ENCODE measurements at regions of chr9 and their contacts with region 1.

Region 1: GRCh38 chr9:81689343-81690190 is at the start of gene TLE1:
- DNase-seq: peak; percentile 100
- ATAC-seq: peak; percentile 97
- H3K4me3 ChIP-seq: peak within 1 kb of the TSS; percentile 78 to 96
- H3K27ac ChIP-seq: peak within 1 kb of the TSS; percentile 87 to 92
- H3K4me1 ChIP-seq: peaks cover 0 to 5% of the 10 kb centered on the region in 2 donors
- H3K27me3 ChIP-seq: no peaks in the 10 kb centered on the region
- total RNA-seq, gene TLE1: 31.0 to 32.7 TPM

Region 2: DNA sequence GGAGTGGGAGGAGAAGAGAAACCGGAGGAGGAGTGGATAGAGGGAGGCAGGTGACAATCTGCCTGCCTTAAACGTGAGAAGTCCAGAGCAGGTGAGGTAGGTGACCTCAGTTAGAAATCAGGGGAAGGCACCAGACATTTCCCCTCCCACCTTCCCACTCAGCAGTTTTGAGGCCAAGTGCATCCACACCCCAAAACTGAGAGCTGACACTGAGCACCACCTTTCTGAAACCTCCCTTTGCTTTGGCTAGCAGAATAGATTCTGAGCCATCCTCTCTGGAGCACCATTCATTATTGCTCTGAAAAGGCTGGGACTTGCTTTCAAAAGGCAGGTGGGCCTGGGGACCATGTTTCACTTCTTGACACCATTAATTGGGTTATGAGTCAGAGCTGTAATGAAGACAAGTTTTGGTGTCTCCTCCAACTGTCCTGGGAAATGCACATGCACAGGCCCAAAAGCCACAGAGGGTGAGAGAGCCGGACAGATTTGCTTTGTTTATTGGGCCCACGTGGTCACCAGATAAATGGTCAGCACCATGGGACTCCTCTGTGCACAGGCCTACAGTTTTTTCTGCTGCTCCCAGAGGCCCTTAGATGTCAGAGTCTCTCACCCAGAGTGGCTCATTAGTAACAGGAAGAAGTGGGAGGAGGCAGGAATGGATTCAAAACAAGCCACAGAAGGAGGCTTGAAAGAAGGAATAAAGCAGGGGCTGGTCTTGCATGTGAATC is 314.9 kb before region 1 on chr9:
- intact Hi-C with region 1: loop called in 1 of 2 experiments (anchors 10 kb)
- DNase-seq: no peak
- ATAC-seq: no peak
- H3K4me3 ChIP-seq: no peak overlapping the region
- H3K27ac ChIP-seq: no peak overlapping the region
- H3K4me1 ChIP-seq: peaks cover 7 to 9% of the 10 kb centered on the region in 2 donors
- H3K27me3 ChIP-seq: no peaks in the 10 kb centered on the region

Region 3: DNA sequence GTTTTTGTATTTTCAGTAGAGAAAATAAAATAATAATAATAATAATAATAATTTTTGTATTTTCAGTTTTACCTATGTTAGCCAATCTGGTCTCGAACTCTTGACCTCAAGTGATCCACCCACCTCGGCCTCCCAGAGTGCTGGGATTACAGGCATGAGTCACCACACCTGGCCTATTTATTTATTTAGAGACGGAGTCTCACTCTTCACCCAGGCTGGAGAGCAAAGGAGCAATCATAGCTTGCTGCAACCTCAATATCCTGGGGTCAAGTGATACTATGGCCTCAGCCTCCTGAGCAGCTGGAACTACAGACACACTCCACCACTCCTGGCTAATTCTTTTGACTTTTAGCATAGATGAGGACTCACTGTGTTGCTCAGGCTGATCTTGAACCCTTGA is 167.7 kb before region 1 on chr9:
- intact Hi-C with region 1: loop called (anchors 1 kb)
- DNase-seq: no peak
- ATAC-seq: no peak
- H3K4me3 ChIP-seq: no peak overlapping the region
- H3K27ac ChIP-seq: no peak overlapping the region
- H3K4me1 ChIP-seq: no peaks in the 10 kb centered on the region
- H3K27me3 ChIP-seq: no peaks in the 10 kb centered on the region

Region 4: DNA sequence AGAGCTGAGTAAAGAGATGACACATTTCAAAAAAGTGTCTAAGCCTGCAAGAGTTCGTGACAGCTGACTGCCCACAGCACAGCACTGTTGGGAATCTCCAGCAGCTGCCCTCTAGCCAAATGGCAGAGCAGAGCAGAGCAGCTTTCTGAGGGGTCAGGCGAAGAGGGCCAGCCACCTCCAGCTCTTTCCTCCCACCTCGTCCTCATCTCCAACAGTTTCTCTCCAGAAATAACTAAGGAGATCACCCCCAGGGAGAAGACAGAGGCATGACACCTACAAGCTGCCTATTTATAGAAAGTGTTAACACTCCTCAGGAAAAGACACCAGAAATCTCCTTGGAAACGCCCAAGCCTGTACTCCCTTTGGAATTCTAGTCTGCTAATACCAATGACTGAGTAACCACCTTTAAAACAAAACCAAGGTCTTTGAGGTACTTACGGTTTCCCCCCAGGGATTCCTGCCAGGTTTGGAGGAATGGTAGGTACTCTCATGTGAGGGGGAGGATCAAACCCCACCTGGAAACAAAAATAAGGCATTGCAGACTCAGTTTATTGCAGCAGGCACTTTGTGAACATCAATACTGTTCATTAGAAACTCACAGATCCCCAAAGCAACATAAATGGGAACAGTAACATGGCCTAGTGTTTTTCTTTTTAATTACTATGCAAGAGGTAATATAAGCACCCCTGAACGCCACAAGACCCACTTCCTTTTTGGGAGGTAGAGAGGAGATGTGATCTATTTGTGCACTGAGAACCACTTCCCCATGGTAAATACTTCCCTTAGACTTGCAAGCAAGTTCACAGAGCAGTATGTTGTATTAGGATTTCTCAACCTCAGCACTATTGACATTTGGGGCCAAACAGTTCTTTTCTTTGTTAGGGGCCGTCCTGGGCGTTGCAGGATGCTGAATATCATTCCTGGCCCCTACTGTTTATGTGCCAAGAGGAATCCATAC is 79.5 kb before region 1 on chr9:
- intact Hi-C with region 1: loop called in 1 of 2 experiments (anchors 5 kb)
- DNase-seq: no peak
- ATAC-seq: no peak
- H3K4me3 ChIP-seq: no peak overlapping the region
- H3K27ac ChIP-seq: peak overlapping the region; percentile 5 to 75
- H3K4me1 ChIP-seq: peaks cover 0 to 3% of the 10 kb centered on the region in 2 donors
- H3K27me3 ChIP-seq: no peaks in the 10 kb centered on the region

Region 5: DNA sequence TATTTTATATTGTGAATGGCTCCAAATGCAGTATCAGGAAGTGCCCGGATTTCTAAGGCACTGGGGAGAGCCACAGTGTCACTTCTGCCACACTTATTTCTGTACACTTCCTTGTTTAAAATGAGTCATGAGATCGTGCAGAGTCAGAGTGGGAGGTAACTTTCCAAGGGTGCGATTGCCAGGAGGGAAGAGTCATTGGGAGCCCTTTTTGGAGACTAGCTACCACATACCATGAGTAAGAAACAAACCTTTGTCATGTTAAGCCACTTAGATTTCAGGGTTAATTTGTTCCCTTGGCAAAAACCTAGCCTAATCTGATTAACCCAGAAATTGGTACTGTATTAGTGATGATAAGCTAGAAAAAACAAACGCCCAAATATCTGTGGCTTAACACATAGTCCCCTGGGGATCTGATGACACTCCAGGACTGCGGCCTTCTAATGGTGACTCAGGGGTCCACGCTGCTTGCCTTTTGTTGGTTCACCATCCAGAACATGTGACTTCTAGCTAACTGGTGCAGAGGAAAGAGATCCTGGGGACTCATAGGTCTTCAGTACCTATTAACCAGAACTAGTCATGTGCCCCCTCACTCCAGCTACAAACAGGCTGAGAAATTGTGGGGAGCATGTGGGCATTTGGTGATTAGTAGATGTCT is 48.4 kb after region 1 on chr9:
- intact Hi-C with region 1: no loop called
- DNase-seq: peak in 1 of 2 donors; percentile 75
- ATAC-seq: peak; percentile 83
- H3K4me3 ChIP-seq: no peak overlapping the region
- H3K27ac ChIP-seq: no peak overlapping the region
- H3K4me1 ChIP-seq: peaks cover 0 to 3% of the 10 kb centered on the region in 2 donors
- H3K27me3 ChIP-seq: no peaks in the 10 kb centered on the region

Region 6: DNA sequence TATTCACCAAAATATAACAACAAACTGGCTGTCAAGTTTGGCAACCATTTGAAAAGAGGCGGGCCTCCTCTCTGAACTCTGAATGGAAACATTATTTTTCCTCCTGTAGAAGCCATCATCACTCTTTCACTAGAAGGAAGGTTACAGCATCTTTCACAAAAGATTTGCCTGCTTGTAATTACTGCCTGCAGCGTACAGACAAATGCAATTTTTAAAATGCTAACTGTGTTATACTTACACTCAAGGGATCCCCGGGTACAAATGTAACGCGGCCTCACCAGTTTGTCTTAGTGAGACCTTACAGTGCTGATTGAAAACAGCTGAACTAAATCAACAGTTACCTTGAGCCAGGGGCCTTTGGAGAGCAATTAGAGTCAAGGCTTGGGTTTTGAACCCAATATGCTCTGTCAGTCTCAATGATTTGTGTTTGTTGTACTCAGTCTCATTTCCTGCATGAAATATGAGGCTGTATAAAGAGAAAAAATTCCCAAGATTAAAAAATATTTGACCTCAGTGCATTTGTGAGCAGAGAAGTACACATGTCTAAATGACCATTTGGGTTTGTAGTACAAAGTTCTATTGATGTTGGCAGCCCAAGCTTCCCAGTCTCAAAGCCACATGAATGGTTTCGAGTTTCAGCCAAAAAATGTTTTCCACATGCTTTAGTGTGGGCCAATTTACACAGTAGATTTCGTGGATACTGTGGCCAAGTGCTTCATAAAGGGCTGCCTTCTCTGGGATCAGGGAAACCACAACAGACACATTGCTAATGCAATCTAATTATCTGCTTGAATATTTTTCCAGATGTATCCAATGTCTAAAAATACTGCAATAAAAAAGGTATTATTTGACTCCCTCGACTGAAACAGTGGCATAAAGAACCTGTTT is 799.0 kb after region 1 on chr9:
- intact Hi-C with region 1: loop called in 1 of 2 experiments (anchors 10 kb)
- DNase-seq: no peak
- ATAC-seq: peak; percentile 88
- H3K4me3 ChIP-seq: no peak overlapping the region
- H3K27ac ChIP-seq: peak overlapping the region; percentile 44 to 60
- H3K4me1 ChIP-seq: peaks cover 0 to 3% of the 10 kb centered on the region in 2 donors
- H3K27me3 ChIP-seq: no peaks in the 10 kb centered on the region

Measured in aorta (tissue), 5 donors.